GM12878 (cell line): ENCODE measurements at regions of chr14 and their contacts with region 1.

Region 1: DNA sequence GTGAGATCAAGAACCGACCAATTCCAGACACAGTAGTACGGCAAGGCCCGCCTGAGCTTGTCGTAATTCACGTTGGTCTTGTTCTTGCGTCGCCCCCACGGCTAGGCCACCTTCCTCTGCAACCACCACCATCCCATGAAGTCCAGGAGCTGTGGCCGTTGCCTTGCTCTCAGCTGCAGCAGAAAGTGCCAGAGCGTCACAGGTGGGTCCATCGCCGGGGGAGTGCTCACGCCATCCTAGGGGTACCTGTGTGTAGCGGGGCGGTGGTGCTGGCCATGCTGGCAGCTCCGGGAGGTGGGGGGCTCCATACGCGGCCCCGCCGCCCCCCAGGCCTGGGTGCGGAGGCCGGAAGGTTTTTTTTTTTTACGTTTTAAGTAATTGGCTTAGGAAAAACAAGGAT is 23.1 kb downstream of the TMEM121 start:
- DNase-seq: no peak
- ATAC-seq: no peak
- H3K4me3 ChIP-seq: no peak overlapping the region
- H3K27ac ChIP-seq: no peak overlapping the region
- H3K4me1 ChIP-seq: no peaks in the 10 kb centered on the region
- H3K27me3 ChIP-seq: peaks cover 0 to under 1% of the 10 kb centered on the region in 2 experiments; a peak in 1 of 4 replicates
- CTCF ChIP-seq: no peak
- EP300 ChIP-seq: no peak
- POLR2A ChIP-seq: no peak
- RAD21 ChIP-seq: no peak

Region 2: DNA sequence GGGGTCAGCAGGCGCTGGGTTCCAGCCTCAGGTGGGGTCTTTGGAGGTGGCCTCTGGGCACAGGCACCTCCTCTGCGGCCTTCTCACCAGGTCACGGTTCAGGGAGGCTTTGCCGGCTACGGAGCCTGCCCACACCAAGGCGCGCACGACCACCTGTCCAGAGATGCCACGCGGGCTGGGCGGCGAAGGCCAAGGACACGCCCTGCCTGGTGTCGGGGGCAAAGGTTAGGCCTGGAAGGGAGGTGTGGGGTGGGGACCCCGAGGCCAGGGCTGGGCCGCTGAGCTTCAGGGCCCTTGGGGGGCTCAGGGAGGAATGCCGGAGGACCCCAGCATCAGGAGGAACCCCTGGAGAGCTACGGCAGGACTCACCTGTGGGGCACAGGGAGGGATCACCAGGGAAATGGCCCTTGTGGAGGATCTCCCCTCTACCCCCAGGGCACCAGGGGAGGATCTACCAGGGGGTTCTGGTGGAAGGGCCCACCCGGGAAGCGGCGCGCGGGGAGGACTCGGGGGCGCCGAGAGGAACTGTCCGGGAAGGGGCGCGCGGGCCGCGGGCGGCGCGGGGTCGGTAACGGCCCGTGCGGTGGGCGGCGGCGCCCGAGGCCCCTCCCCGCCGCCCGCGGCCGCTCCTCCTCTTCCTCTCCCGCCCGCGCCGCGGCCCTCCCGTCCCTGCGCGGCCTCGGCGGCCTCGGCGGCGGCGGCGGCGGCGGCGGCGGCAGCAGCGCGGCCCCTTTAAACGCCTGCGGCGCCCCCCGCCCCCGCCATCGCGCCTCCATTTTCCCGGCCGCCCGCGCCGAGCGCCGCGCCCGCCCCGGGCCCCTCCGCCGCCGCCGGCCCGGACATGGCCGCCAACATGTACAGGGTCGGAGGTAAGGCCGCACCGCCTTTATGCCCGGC is 130.0 kb before region 1 on chr14 and contains the start of gene MTA1:
- CTCF ChIA-PET with region 1: no interaction called
- POLR2A ChIA-PET with region 1: no interaction called
- RAD21 ChIA-PET with region 1: no interaction called
- SMC1A ChIA-PET with region 1: no interaction called
- in situ Hi-C with region 1: no loop called
- intact Hi-C with region 1: no loop called
- DNase-seq: no peak
- ATAC-seq: peak; percentile 62
- H3K4me3 ChIP-seq: peak within 1 kb of the TSS; percentile 98
- H3K27ac ChIP-seq: peak within 1 kb of the TSS; percentile 71
- H3K4me1 ChIP-seq: peaks cover 15% of the 10 kb centered on the region
- H3K27me3 ChIP-seq: no peaks in the 10 kb centered on the region
- CTCF ChIP-seq: no peak
- EP300 ChIP-seq: no peak
- POLR2A ChIP-seq: peak; percentile 52
- RAD21 ChIP-seq: no peak
- polyA plus RNA-seq, gene MTA1: 0.14 to 0.69 TPM

Region 3: DNA sequence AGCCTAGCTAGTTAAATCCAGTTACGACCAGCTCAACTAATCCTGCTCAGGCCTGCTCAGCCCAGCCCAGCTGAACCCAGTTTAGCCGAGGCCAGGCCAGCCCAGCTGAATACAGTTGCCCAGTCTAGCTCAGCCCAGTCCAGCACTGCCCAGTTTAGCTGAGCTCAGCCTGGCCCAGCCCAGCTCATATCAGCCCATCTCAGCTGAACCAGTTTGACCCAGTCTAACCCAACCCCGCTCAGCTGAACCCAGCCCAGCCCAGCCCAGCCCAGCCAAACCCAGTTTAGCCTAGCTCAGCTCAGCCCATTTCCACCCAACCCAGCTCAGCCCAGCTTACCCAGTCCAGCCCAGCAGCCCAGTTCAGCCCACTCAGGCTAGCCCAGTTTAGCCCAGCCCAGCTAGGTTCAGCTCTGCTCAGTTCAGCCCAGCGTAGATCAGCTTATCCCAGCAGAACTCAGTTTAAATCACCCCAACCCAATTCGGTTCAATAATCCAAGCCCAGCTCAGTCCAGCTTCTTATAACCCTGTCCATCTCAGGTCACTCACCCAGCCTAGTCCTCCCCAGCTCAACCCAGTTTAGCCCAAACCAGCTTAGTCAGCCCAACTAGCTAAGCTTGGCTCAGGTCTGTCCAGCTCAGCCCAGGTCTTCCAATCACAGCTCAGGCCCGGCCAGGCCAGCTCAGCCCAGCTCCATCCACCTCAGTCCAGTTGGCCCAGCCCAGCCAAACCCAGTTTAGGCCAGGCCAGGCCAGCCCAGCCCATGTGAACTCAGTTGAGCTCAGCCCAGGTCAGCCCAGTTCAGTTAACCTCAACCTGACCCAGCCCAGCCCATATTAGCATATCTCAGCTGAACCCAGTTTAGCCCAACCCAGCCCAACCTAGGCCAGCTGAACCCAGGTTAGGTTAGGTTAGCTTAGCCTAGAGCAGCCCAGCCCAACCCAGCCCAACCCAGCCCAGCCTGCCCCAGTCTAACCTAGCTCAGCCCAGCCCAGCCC is 53.6 kb after region 1 on chr14:
- CTCF ChIA-PET with region 1: no interaction called
- POLR2A ChIA-PET with region 1: no interaction called
- RAD21 ChIA-PET with region 1: no interaction called
- SMC1A ChIA-PET with region 1: no interaction called
- in situ Hi-C with region 1: loop called (anchors 5 kb)
- intact Hi-C with region 1: no loop called
- DNase-seq: no peak
- ATAC-seq: no peak
- H3K4me3 ChIP-seq: no peak overlapping the region
- H3K27ac ChIP-seq: no peak overlapping the region
- H3K4me1 ChIP-seq: no peaks in the 10 kb centered on the region; the same call in 1 of the 2 replicates
- H3K27me3 ChIP-seq: no peaks in the 10 kb centered on the region
- CTCF ChIP-seq: no peak
- EP300 ChIP-seq: no peak
- POLR2A ChIP-seq: no peak
- RAD21 ChIP-seq: no peak

Region 4: GRCh38 chr14:105627711-105628110 is 78.2 kb after region 1 on chr14:
- CTCF ChIA-PET with region 1: no interaction called
- POLR2A ChIA-PET with region 1: no interaction called
- RAD21 ChIA-PET with region 1: no interaction called
- SMC1A ChIA-PET with region 1: no interaction called
- in situ Hi-C with region 1: loop called (anchors 5 kb)
- intact Hi-C with region 1: no loop called
- DNase-seq: no peak
- ATAC-seq: no peak
- H3K4me3 ChIP-seq: no peak overlapping the region
- H3K27ac ChIP-seq: no peak overlapping the region
- H3K4me1 ChIP-seq: peaks cover 6% of the 10 kb centered on the region; the same call in 1 of the 2 replicates
- H3K27me3 ChIP-seq: no peaks in the 10 kb centered on the region
- CTCF ChIP-seq: no peak
- EP300 ChIP-seq: no peak
- POLR2A ChIP-seq: no peak
- RAD21 ChIP-seq: no peak

Region 5: GRCh38 chr14:105666420-105666819 is 116.9 kb after region 1 on chr14:
- CTCF ChIA-PET with region 1: no interaction called
- POLR2A ChIA-PET with region 1: no interaction called
- RAD21 ChIA-PET with region 1: no interaction called
- SMC1A ChIA-PET with region 1: no interaction called
- in situ Hi-C with region 1: loop called (anchors 5 kb)
- intact Hi-C with region 1: no loop called
- DNase-seq: no peak
- ATAC-seq: no peak
- H3K4me3 ChIP-seq: no peak overlapping the region
- H3K27ac ChIP-seq: no peak overlapping the region
- H3K4me1 ChIP-seq: no peaks in the 10 kb centered on the region
- H3K27me3 ChIP-seq: no peaks in the 10 kb centered on the region
- CTCF ChIP-seq: no peak
- EP300 ChIP-seq: no peak
- POLR2A ChIP-seq: no peak
- RAD21 ChIP-seq: no peak

Region 6: GRCh38 chr14:106372870-106373652 is 823.6 kb after region 1 on chr14:
- CTCF ChIA-PET with region 1: interaction called, 6 read pairs
- POLR2A ChIA-PET with region 1: no interaction called
- RAD21 ChIA-PET with region 1: no interaction called
- SMC1A ChIA-PET with region 1: no interaction called
- in situ Hi-C with region 1: loop called (anchors 10 kb)
- intact Hi-C with region 1: no loop called
- DNase-seq: no peak
- ATAC-seq: peak; percentile 99
- H3K4me3 ChIP-seq: no peak overlapping the region
- H3K27ac ChIP-seq: no peak overlapping the region
- H3K4me1 ChIP-seq: peaks cover 6% of the 10 kb centered on the region; the same call in 1 of the 2 replicates
- H3K27me3 ChIP-seq: no peaks in the 10 kb centered on the region; a peak in 2 of 4 replicates
- CTCF ChIP-seq: peak; percentile 86 to 93 (median 89)
- EP300 ChIP-seq: 0 out of 4 replicates have a peak, but pooled peaks of 1 of the 2 experiments have one; percentile 9
- POLR2A ChIP-seq: no peak
- RAD21 ChIP-seq: peak; percentile 88